Prostate gland (tissue), 2 donors: ENCODE measurements at regions of chr4 and their contacts with region 1.

Region 1: GRCh38 chr4:147866532-147867271 is 134.8 kb downstream of the ARHGAP10 start:
- DNase-seq: peak; percentile 93
- H3K4me3 ChIP-seq: no peak overlapping the region
- H3K27ac ChIP-seq: no peak overlapping the region
- H3K4me1 ChIP-seq: no peaks in the 10 kb centered on the region
- H3K27me3 ChIP-seq: no peaks in the 10 kb centered on the region
- CTCF ChIP-seq: peak; percentile 99 to 100 (median 99)
- POLR2A ChIP-seq: no peak

Region 2: DNA sequence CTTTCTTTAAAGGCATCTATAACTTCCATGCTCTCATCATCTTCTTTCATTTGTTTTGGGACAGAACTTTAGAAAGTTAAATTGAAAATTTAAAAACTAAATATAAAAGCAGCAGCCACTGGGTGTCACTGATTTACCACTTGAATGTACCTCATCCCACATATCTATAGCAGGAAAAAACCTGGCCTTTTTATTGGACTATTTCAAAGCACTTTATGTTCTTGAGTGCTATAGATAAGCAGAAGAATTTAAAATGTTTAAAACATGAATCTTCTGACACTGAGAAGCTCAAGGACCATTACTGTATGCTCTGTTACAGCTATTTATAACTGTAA is 755.7 kb before region 1 on chr4:
- intact Hi-C with region 1: loop called (anchors 10 kb)
- DNase-seq: no peak
- H3K4me3 ChIP-seq: no peak overlapping the region
- H3K27ac ChIP-seq: no peak overlapping the region
- H3K4me1 ChIP-seq: no peaks in the 10 kb centered on the region
- H3K27me3 ChIP-seq: no peaks in the 10 kb centered on the region
- CTCF ChIP-seq: peak in 3 of 4 experiments; percentile 38 to 67 (median 44)
- POLR2A ChIP-seq: no peak

Region 3: DNA sequence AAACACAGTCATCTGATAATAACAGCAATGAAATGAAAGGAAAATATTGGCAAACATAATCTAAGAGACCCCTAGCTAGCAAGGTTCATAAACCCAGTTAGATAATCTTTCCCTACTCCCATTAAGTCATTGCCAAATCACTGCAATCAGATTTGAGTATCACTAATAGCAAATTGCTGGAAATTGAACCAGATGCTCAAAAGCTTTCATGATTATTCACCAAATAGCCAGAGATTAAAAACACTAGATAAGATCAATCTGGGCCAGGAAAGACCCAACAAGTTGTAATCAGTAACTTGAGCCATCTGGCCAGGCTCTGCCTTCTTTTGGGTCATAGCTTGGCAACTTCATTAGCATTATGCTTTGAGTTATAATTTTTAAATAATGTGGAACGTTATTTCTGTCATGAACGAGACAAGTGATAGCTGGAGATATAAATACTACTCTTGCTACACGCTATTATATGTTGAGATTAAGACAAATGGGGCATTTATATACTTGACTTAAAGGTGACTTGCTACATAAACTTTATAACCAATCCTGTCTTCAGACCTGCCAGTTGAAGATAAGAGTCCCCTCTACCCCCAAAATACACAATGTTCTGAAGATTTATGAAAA is 582.4 kb before region 1 on chr4:
- intact Hi-C with region 1: no loop called
- DNase-seq: no peak
- H3K4me3 ChIP-seq: no peak overlapping the region
- H3K27ac ChIP-seq: no peak overlapping the region
- H3K4me1 ChIP-seq: no peaks in the 10 kb centered on the region
- H3K27me3 ChIP-seq: no peaks in the 10 kb centered on the region
- CTCF ChIP-seq: no peak
- POLR2A ChIP-seq: no peak

Region 4: DNA sequence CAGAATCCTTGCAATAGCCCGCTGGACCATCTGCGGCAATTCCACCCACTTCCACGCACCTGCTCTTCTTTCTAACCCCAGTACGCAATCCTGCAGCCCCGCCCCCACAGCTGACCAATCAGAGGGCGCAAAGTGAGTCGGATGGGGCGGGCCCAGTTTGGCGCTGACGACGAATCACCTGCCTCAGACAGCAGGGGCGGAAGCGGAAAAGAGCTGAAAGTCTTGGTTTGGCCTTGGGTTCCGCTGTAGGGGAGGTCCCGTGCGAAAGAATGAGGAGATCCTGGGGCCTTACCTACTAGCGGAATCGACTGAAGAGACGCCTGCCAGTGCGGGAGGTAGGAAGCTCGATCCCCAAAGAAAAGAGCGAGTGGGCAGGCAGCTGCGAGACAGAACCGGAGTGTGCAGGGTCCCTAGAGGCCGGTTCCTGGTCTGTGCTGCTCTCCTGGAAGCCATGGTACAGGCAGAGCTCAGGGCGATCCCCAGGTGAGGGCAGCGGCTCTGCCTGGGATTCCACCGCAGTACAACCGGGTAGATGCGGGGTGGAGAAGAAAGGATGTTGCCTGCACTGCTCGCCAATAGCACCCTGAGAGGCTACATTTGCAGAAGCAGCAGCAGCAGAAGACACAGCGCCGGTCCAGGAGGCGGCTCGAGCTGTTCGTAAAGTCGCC is 249.4 kb before region 1 on chr4 and contains the start of gene TMEM184C:
- intact Hi-C with region 1: loop called (anchors 10 kb)
- DNase-seq: peak; percentile 98
- H3K4me3 ChIP-seq: peak within 1 kb of the TSS; percentile 70 to 71
- H3K27ac ChIP-seq: peak within 1 kb of the TSS; percentile 74 to 85
- H3K4me1 ChIP-seq: no peaks in the 10 kb centered on the region
- H3K27me3 ChIP-seq: no peaks in the 10 kb centered on the region
- CTCF ChIP-seq: peak in 1 of 4 experiments; percentile 20
- POLR2A ChIP-seq: peak; percentile 68
- total RNA-seq, gene TMEM184C: 34.7 to 48.0 TPM

Region 5: GRCh38 chr4:147707865-147708672 is 158.6 kb before region 1 on chr4:
- intact Hi-C with region 1: loop called (anchors 2 kb)
- DNase-seq: peak; percentile 54
- H3K4me3 ChIP-seq: no peak overlapping the region
- H3K27ac ChIP-seq: no peak overlapping the region
- H3K4me1 ChIP-seq: no peaks in the 10 kb centered on the region
- H3K27me3 ChIP-seq: no peaks in the 10 kb centered on the region
- CTCF ChIP-seq: peak; percentile 83 to 94 (median 86)
- POLR2A ChIP-seq: no peak

Region 6: GRCh38 chr4:147731580-147732517 is 134.9 kb before region 1 on chr4 and contains the start of gene ARHGAP10:
- intact Hi-C with region 1: loop called (anchors 5 kb)
- DNase-seq: peak; percentile 58
- H3K4me3 ChIP-seq: peak within 1 kb of the TSS; percentile 48 to 61
- H3K27ac ChIP-seq: peak within 1 kb of the TSS; percentile 79 to 85
- H3K4me1 ChIP-seq: peaks cover 2% of the 10 kb centered on the region
- H3K27me3 ChIP-seq: no peaks in the 10 kb centered on the region
- CTCF ChIP-seq: no peak
- POLR2A ChIP-seq: peak; percentile 12
- total RNA-seq, gene ARHGAP10: 30.3 to 69.6 TPM